GM13976 (cell line): ENCODE measurements at regions of chrX and their contacts with region 1.

Region 1: DNA sequence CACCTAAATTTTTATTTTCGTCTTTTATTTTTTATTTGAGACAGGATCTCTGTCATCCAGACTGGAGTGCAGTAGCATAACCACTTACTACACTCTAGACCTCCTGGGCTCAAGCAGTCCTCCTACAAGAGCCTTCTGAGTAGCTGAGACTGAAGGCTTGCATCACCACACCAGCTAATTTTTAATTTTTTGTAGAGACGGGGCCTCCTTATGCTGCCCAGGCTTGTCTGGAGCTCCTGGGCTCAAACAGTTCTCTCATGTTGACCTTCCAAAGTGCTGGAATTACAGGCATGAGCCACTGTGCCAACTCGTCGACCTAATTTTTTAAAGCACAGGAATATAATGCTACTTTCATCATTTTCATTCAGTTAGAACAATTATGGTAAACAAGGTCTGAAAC is 405.4 kb downstream of the AR start:
- DNase-seq: no peak
- CTCF ChIP-seq: no peak

Region 2: DNA sequence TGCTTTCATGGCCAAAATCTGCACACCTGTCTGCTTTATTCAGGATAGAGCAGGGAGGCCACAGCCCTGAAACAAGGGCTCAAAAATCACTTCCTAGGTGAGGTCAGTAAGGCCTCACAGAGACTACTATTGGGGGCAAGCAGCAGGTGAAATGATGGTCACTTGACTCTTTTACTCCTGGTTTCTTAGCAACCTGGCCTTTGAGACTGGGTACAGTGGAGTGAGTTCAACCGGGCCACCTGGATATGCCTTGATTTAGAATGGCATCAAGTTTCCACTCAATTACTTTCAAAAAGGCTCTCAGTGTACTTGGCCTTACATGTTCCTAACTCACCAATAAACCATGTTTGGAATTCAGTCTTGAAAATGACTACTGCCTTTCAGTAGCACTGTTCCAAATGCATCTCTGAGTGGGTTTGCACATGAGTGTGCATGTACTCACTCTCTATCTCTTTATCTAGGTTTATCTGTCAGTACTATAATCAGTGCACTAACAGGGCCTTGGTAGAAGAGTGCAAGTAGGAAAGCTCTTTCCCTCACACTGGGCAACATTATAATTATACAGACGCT is 95.8 kb after region 1 on chrX:
- in situ Hi-C with region 1: loop called (anchors 25 kb)
- DNase-seq: no peak
- CTCF ChIP-seq: no peak

Region 3: DNA sequence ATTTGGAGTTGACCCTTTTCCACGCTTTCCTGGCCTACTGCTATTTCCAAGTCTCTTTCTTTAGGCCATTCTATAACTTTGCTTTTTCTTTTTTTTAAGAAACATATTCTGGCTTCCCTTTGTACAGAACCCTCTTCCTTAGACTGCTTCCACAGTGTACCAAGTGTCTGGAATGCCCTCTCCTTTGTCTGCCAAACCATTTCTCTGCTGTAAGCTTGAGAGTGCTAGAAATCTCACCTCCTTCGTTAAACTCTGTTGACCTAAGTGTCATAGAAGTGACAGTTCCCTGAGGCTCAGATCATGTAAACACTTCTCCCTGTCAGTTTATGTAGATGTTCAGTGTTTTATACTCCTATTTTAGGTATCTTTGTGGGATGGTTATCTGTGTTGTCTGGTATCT is 1775.0 kb after region 1 on chrX:
- in situ Hi-C with region 1: no loop called
- DNase-seq: no peak
- CTCF ChIP-seq: no peak